ENCODE measurements at regions of chr19 and their contacts with region 1.

Region 1: GRCh38 chr19:2782936-2783780 is at the start of gene SGTA:
- DNase-seq: peak; percentile 90
- ATAC-seq: peak; percentile 65
- H3K4me3 Mint-ChIP-seq: peak within 1 kb of the TSS; percentile 86
- H3K27ac Mint-ChIP-seq: peak within 1 kb of the TSS; percentile 90
- H3K4me1 Mint-ChIP-seq: peaks cover 76% of the 10 kb centered on the region
- H3K27me3 Mint-ChIP-seq: no peaks in the 10 kb centered on the region
- CTCF ChIP-seq: no peak
- total RNA-seq, gene SGTA: 45.6 and 47.3 TPM in 2 replicates

Region 2: GRCh38 chr19:2427429-2428320 is 355.5 kb before region 1 on chr19 and contains the start of gene TIMM13:
- CTCF ChIA-PET with region 1: no interaction called
- POLR2A ChIA-PET with region 1: interaction called, 3 read pairs
- intact Hi-C with region 1: loop called (anchors 1 kb)
- DNase-seq: peak; percentile 99
- ATAC-seq: peak; percentile 94
- H3K4me3 Mint-ChIP-seq: peak within 1 kb of the TSS; percentile 90
- H3K27ac Mint-ChIP-seq: peak within 1 kb of the TSS; percentile 95
- H3K4me1 Mint-ChIP-seq: peaks cover 21% of the 10 kb centered on the region
- H3K27me3 Mint-ChIP-seq: no peaks in the 10 kb centered on the region
- CTCF ChIP-seq: no peak
- total RNA-seq, gene TIMM13: 63.9 and 65.3 TPM in 2 replicates

Region 3: GRCh38 chr19:2648528-2648937 is 134.6 kb before region 1 on chr19:
- CTCF ChIA-PET with region 1: interaction called, 11 read pairs
- POLR2A ChIA-PET with region 1: no interaction called
- intact Hi-C with region 1: no loop called
- DNase-seq: peak; percentile 75
- ATAC-seq: peak; percentile 87
- H3K4me3 Mint-ChIP-seq: no peak overlapping the region
- H3K27ac Mint-ChIP-seq: peak overlapping the region; percentile 35
- H3K4me1 Mint-ChIP-seq: peaks cover 43% of the 10 kb centered on the region
- H3K27me3 Mint-ChIP-seq: no peaks in the 10 kb centered on the region
- CTCF ChIP-seq: no peak

Region 4: GRCh38 chr19:2739602-2740313 is 43.4 kb before region 1 on chr19 and contains the start of gene SLC39A3:
- CTCF ChIA-PET with region 1: no interaction called
- POLR2A ChIA-PET with region 1: interaction called, 11 read pairs
- intact Hi-C with region 1: loop called (anchors 1 kb)
- DNase-seq: peak; percentile 94
- ATAC-seq: peak; percentile 100
- H3K4me3 Mint-ChIP-seq: peak within 1 kb of the TSS; percentile 88
- H3K27ac Mint-ChIP-seq: peak within 1 kb of the TSS; percentile 65
- H3K4me1 Mint-ChIP-seq: peaks cover 28% of the 10 kb centered on the region
- H3K27me3 Mint-ChIP-seq: peaks cover 3% of the 10 kb centered on the region
- CTCF ChIP-seq: no peak
- total RNA-seq, gene SLC39A3: 33.8 and 34.3 TPM in 2 replicates

Region 5: GRCh38 chr19:2750808-2751443 is 32.2 kb before region 1 on chr19:
- CTCF ChIA-PET with region 1: no interaction called
- POLR2A ChIA-PET with region 1: interaction called, 3 read pairs
- intact Hi-C with region 1: loop called (anchors 1 kb)
- DNase-seq: no peak
- ATAC-seq: no peak
- H3K4me3 Mint-ChIP-seq: no peak overlapping the region
- H3K27ac Mint-ChIP-seq: no peak overlapping the region
- H3K4me1 Mint-ChIP-seq: peaks cover 12% of the 10 kb centered on the region
- H3K27me3 Mint-ChIP-seq: no peaks in the 10 kb centered on the region
- CTCF ChIP-seq: no peak

Region 6: GRCh38 chr19:2804156-2805004 is 21.2 kb after region 1 on chr19:
- CTCF ChIA-PET with region 1: no interaction called
- POLR2A ChIA-PET with region 1: no interaction called
- intact Hi-C with region 1: no loop called
- DNase-seq: no peak
- ATAC-seq: no peak
- H3K4me3 Mint-ChIP-seq: no peak overlapping the region
- H3K27ac Mint-ChIP-seq: no peak overlapping the region
- H3K4me1 Mint-ChIP-seq: no peaks in the 10 kb centered on the region
- H3K27me3 Mint-ChIP-seq: no peaks in the 10 kb centered on the region
- CTCF ChIP-seq: no peak

Region 7: GRCh38 chr19:2820112-2820702 is 37.0 kb after region 1 on chr19:
- CTCF ChIA-PET with region 1: no interaction called
- POLR2A ChIA-PET with region 1: interaction called, 6 read pairs
- intact Hi-C with region 1: loop called (anchors 1 kb)
- DNase-seq: no peak
- ATAC-seq: no peak
- H3K4me3 Mint-ChIP-seq: peak overlapping the region; percentile 83
- H3K27ac Mint-ChIP-seq: no peak overlapping the region
- H3K4me1 Mint-ChIP-seq: peaks cover 14% of the 10 kb centered on the region
- H3K27me3 Mint-ChIP-seq: no peaks in the 10 kb centered on the region
- CTCF ChIP-seq: no peak

Region 8: DNA sequence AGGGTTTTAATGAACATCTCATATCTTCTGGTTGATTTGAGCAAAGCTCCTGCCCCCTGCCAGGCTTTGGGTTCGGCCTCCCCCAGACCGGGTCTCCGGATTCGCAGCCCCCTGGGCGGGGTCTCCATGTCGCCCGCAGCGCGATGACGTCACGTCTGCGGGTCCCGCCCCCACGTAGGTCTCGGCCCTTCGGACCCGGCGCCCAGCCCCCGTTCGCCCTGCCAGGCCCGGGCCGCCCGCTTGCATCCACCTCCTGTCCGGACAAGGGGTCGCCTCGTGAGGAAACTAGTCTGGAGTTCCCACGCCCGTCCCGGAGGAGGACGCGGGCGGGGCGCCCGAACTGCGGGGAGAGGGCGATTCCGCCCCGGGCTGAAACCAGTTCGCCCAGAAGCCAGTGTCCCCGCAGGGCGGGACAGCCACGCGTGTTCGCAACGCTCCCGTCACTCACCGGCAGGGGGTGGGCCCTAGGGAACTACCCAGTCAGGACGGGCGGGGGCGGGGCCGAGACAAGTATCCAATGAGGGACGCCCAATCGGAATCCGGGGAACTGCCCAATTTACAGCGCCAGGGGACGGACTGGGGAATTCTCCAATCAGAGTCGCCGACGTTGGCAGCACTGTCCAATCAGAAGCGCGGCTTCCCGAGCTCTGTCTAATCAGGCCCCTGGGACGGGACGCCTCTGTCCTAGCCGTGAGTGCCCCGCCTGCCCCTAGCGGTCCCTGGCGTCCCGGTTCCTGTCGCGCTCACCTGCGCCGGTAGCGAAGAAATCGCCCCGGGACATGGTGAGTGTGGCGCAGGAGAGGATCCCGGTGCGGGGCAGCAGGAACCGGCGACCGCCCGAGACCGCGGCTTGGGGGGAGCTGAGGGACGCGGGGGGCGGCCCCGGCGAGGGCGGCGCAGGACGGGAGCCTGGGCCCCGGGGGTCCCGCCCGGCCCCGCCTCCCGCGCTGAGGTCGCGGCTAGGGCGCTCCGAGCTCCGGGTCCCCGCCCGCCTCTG is 57.9 kb after region 1 on chr19 and contains the start of gene ZNF555:
- CTCF ChIA-PET with region 1: interaction called, 3 read pairs
- POLR2A ChIA-PET with region 1: interaction called, 7 read pairs
- intact Hi-C with region 1: loop called (anchors 1 kb)
- DNase-seq: peak; percentile 88
- ATAC-seq: peak; percentile 90
- H3K4me3 Mint-ChIP-seq: peak within 1 kb of the TSS; percentile 92
- H3K27ac Mint-ChIP-seq: peak within 1 kb of the TSS; percentile 83
- H3K4me1 Mint-ChIP-seq: peaks cover 19% of the 10 kb centered on the region
- H3K27me3 Mint-ChIP-seq: no peaks in the 10 kb centered on the region
- CTCF ChIP-seq: no peak
- total RNA-seq, gene ZNF555: 7.4 and 8.4 TPM in 2 replicates

Measured in activated B cell treated with CpG ODN at 0.5 μM for 24 hours (primary cell).